MCF 10A (cell line): ENCODE measurements at regions of chr1 and their contacts with region 1.

Region 1: GRCh38 chr1:48109390-48110013 is 112.3 kb upstream of the TRABD2B start:
- DNase-seq: peak; percentile 74
- H3K4me3 Mint-ChIP-seq: no peak overlapping the region
- H3K27ac Mint-ChIP-seq: no peak overlapping the region
- H3K4me1 Mint-ChIP-seq: peaks cover 42% of the 10 kb centered on the region
- H3K27me3 Mint-ChIP-seq: no peaks in the 10 kb centered on the region
- CTCF ChIP-seq: peak; percentile 86

Region 2: DNA sequence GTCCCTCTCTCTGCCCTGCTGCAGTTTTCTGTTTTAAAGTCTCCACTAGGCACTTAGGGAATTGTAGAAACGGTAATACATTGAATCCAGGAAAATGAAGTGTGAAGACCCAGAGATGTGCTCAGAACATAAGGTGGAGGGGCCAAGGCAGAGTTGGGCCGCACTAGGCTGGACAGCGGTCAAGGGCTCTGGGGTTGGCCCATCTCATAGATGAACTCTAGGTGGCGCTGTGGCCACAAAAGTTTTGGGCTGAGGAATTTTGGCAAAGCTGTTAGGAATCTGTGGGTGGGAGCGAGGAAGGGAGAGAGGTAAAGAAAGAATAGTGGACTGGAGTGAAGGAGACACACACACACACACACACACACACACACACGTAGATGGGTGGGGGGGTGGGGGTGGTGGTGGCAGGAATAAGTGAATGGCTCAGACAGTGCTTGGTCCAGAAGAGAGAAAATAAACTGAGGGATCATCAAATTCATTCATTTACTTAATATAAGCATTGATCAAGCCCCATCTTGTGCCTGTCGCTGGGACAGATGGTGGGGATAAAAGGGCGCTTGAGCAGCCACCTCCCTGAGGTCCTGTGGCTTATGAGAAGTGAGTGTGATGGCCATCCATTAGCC is 370.8 kb before region 1 on chr1:
- CTCF ChIA-PET with region 1: interaction called, 3 read pairs
- POLR2A ChIA-PET with region 1: no interaction called
- intact Hi-C with region 1: loop called (anchors 5 kb)
- DNase-seq: peak; percentile 73
- H3K4me3 Mint-ChIP-seq: no peak overlapping the region
- H3K27ac Mint-ChIP-seq: no peak overlapping the region
- H3K4me1 Mint-ChIP-seq: no peaks in the 10 kb centered on the region
- H3K27me3 Mint-ChIP-seq: peaks cover 25% of the 10 kb centered on the region
- CTCF ChIP-seq: peak; percentile 77

Region 3: GRCh38 chr1:47936916-47937510 is 172.5 kb before region 1 on chr1:
- CTCF ChIA-PET with region 1: no interaction called
- POLR2A ChIA-PET with region 1: no interaction called
- intact Hi-C with region 1: no loop called
- DNase-seq: no peak
- H3K4me3 Mint-ChIP-seq: no peak overlapping the region
- H3K27ac Mint-ChIP-seq: no peak overlapping the region
- H3K4me1 Mint-ChIP-seq: peaks cover 54% of the 10 kb centered on the region
- H3K27me3 Mint-ChIP-seq: no peaks in the 10 kb centered on the region
- CTCF ChIP-seq: no peak

Region 4: GRCh38 chr1:47951545-47952234 is 157.8 kb before region 1 on chr1:
- CTCF ChIA-PET with region 1: no interaction called
- POLR2A ChIA-PET with region 1: no interaction called
- intact Hi-C with region 1: no loop called
- DNase-seq: no peak
- H3K4me3 Mint-ChIP-seq: no peak overlapping the region
- H3K27ac Mint-ChIP-seq: no peak overlapping the region
- H3K4me1 Mint-ChIP-seq: peaks cover 6% of the 10 kb centered on the region
- H3K27me3 Mint-ChIP-seq: no peaks in the 10 kb centered on the region
- CTCF ChIP-seq: no peak

Region 5: DNA sequence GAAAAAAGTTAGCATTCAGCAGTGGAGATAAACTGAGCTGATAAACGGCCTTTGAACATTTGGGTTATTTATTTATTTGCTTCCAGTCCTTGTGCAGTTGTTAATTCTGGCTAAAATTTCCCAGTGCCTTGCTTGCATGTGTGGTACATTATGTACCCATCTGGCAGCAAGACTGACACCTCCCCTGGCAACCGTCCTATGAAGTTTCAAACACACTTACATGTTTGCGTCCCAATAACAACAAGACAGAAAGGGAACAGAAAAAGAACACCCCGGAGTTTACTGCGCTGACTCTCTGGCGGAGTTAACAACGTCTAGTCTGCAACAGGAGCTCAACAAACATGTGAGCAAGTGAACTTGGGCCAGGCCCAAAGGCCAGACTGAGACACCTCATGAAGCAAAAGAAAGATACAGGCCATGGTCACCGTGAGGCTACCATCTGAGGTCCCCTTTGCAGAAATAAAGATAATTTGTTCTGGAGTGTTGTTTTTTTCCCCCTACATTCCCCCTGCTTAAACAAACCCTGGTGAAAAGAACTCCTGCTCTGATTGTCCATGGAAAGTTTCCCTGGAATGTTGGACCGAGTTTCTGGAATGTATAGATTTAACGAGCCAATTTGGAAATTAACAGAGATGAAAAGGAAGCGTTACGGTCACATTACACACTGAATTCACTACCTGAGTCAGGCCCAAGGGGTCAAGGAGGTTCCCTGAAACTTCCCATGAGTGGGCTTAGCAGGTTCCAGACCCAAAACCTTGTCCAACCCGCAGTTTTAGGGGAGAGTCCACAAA is 145.7 kb before region 1 on chr1:
- CTCF ChIA-PET with region 1: no interaction called
- POLR2A ChIA-PET with region 1: no interaction called
- intact Hi-C with region 1: no loop called
- DNase-seq: no peak
- H3K4me3 Mint-ChIP-seq: no peak overlapping the region
- H3K27ac Mint-ChIP-seq: peak overlapping the region; percentile 95
- H3K4me1 Mint-ChIP-seq: peaks cover 22% of the 10 kb centered on the region
- H3K27me3 Mint-ChIP-seq: no peaks in the 10 kb centered on the region
- CTCF ChIP-seq: no peak

Region 6: GRCh38 chr1:48127735-48128685 is 18.5 kb after region 1 on chr1:
- CTCF ChIA-PET with region 1: interaction called, 24 read pairs
- POLR2A ChIA-PET with region 1: interaction called, 13 read pairs
- intact Hi-C with region 1: no loop called
- DNase-seq: peak; percentile 21
- H3K4me3 Mint-ChIP-seq: no peak overlapping the region
- H3K27ac Mint-ChIP-seq: peak overlapping the region; percentile 70
- H3K4me1 Mint-ChIP-seq: peaks cover 17% of the 10 kb centered on the region
- H3K27me3 Mint-ChIP-seq: no peaks in the 10 kb centered on the region
- CTCF ChIP-seq: no peak

Region 7: GRCh38 chr1:48196237-48196636 is 86.7 kb after region 1 on chr1:
- CTCF ChIA-PET with region 1: interaction called, 198 read pairs
- POLR2A ChIA-PET with region 1: interaction called, 27 read pairs
- intact Hi-C with region 1: no loop called
- DNase-seq: no peak
- H3K4me3 Mint-ChIP-seq: no peak overlapping the region
- H3K27ac Mint-ChIP-seq: no peak overlapping the region
- H3K4me1 Mint-ChIP-seq: peaks cover 47% of the 10 kb centered on the region
- H3K27me3 Mint-ChIP-seq: no peaks in the 10 kb centered on the region
- CTCF ChIP-seq: no peak

Region 8: DNA sequence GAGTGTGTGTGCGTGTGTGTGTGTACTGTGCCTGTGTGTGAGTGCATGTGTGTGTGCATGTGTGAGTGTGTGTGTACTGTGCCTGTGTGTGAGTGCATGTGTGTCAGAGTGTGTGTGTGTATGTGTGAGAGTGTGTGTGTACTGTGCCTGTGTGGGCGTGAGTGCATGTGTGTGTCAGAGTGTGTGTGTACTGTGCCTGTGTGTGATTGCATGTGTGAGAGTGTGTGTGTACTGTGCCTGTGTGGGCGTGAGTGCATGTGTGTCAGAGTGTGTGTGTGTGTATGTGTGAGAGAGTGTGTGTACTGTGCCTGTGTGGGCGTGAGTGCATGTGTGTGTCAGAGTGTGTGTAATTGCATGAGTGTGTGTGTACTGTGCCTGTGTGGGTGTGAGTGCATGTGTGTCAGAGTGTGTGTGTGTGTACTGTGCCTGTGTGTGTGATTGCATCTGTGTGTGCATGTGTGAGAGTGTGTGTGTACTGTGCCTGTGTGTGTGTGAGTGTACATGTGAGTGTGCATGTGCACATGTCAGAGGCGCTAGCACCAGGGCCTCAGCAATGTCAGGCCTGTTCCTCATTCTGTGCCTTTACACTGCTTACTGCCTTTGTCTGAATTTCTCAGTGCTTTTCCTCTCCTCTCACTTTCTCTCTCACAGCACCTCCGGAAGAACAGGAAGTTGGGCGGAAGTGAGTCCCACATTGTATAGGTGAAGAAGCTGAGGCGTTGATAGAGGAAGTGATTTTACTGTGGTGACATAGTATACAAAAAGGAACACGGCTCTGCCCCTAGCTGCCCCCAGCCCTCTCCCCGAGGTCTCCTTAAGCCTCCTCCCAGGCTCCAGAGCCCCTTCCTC is 117.9 kb after region 1 on chr1:
- CTCF ChIA-PET with region 1: interaction called, 7 read pairs
- POLR2A ChIA-PET with region 1: no interaction called
- intact Hi-C with region 1: loop called (anchors 2 kb)
- DNase-seq: no peak
- H3K4me3 Mint-ChIP-seq: no peak overlapping the region
- H3K27ac Mint-ChIP-seq: no peak overlapping the region
- H3K4me1 Mint-ChIP-seq: no peaks in the 10 kb centered on the region
- H3K27me3 Mint-ChIP-seq: no peaks in the 10 kb centered on the region
- CTCF ChIP-seq: no peak

Region 9: GRCh38 chr1:48498096-48498791 is 388.7 kb after region 1 on chr1:
- CTCF ChIA-PET with region 1: interaction called, 4 read pairs
- POLR2A ChIA-PET with region 1: no interaction called
- intact Hi-C with region 1: loop called (anchors 1 kb)
- DNase-seq: peak; percentile 73
- H3K4me3 Mint-ChIP-seq: no peak overlapping the region
- H3K27ac Mint-ChIP-seq: no peak overlapping the region
- H3K4me1 Mint-ChIP-seq: peaks cover 18% of the 10 kb centered on the region
- H3K27me3 Mint-ChIP-seq: no peaks in the 10 kb centered on the region
- CTCF ChIP-seq: peak; percentile 78